ENCODE measurements at regions of chr12 and their contacts with region 1.

Region 1: DNA sequence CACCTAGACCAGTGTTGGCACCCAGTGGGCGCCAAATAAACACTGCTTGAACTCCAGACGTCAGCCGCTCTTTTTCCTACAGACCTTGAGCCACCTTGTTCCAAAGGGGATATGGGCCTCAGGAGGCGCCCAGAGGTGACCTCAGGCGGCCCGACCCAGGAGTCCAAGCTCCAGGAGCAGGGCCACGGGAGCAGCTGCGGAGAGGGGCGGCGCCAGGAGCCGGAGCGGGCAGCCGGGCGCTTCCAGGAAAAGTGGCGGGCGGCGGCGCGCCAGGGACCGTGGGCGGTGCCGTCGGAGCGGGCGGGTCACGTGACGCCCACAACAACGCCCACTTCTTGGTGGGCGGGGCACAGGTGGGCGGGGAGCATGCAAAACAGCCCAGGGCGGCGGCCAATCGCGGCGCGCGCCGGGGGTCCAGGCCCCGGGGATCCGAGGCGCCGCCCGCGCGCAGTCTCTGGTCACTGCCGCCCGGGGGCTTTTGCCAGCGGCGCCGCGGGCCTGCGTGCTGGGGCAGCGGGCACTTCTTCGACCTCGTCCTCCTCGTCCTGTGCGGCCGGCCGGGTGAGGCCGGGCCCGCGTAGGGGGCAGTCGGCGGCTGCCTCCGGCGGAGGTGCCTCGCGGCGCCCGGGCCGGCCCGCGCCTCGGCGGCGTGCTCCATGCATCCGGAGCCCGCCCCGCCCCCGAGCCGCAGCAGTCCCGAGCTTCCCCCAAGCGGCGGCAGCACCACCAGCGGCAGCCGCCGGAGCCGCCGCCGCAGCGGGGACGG is at the start of gene ORAI1:
- DNase-seq: peak; percentile 54
- H3K4me3 ChIP-seq: peak within 1 kb of the TSS; percentile 59
- H3K27me3 ChIP-seq: no peaks in the 10 kb centered on the region
- CTCF ChIP-seq: 0 out of 2 replicates have a peak, but pooled peaks have one; percentile 2
- polyA plus RNA-seq, gene ORAI1: 20.3 and 28.3 TPM in 2 replicates

Region 2: GRCh38 chr12:121467115-121467793 is 159.0 kb before region 1 on chr12:
- CTCF ChIA-PET with region 1: no interaction called
- POLR2A ChIA-PET with region 1: interaction called, 14 read pairs
- DNase-seq: peak; percentile 44
- H3K4me3 ChIP-seq: peak overlapping the region; percentile 49
- H3K27me3 ChIP-seq: no peaks in the 10 kb centered on the region
- CTCF ChIP-seq: no peak

Region 3: GRCh38 chr12:121499929-121500793 is 126.1 kb before region 1 on chr12:
- CTCF ChIA-PET with region 1: interaction called, 15 read pairs
- POLR2A ChIA-PET with region 1: no interaction called
- DNase-seq: peak; percentile 4
- H3K4me3 ChIP-seq: no peak overlapping the region
- H3K27me3 ChIP-seq: no peaks in the 10 kb centered on the region
- CTCF ChIP-seq: peak; percentile 98

Region 4: GRCh38 chr12:121543786-121544185 is 82.5 kb before region 1 on chr12:
- CTCF ChIA-PET with region 1: no interaction called
- POLR2A ChIA-PET with region 1: no interaction called
- DNase-seq: no peak
- H3K4me3 ChIP-seq: no peak overlapping the region
- H3K27me3 ChIP-seq: no peaks in the 10 kb centered on the region
- CTCF ChIP-seq: no peak

Region 5: DNA sequence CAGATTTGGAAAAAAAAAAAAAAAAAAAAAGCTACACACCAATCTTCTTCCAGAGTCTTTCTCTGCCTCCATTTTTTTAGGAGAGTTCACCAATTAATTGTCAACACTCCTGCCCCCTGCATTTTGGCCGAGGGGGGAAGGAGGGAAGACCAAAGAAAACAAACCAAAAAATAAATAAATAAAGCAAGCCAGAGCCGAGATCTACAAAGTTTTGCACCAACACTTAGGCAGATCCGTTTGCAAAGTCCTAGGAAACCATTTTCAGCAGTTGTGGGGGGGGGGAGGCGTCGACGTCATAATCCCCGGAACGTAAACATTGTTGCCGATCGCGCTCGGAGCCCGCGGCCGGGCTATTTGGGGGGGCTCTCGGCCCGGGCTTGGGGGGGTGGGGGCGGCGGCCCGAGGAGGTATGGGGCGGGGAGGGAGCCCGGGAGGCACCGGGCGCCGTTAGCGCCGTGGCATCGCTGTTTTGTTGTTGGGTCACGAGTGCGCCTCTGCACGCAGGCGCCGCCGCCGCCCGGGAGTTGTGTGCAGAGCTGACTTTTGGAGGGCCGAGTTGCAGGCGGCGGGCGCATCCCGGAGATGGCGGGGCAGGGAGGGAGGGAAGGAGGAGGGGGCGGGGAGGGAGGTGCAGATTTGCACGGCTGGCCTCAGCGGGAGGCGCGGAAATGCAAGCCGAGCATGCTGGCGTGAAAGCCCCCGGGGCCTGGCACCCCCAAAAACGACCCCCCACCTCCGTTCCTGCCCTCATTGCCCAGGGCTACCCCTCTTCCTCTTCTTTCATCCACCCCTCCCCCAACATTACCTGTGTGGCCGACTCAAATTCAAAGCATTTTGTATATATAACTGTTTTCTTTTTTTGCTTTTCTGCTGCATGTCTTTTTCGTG is 46.0 kb before region 1 on chr12:
- CTCF ChIA-PET with region 1: interaction called, 14 read pairs
- POLR2A ChIA-PET with region 1: no interaction called
- DNase-seq: no peak
- H3K4me3 ChIP-seq: peak overlapping the region; percentile 57
- H3K27me3 ChIP-seq: no peaks in the 10 kb centered on the region
- CTCF ChIP-seq: no peak

Region 6: DNA sequence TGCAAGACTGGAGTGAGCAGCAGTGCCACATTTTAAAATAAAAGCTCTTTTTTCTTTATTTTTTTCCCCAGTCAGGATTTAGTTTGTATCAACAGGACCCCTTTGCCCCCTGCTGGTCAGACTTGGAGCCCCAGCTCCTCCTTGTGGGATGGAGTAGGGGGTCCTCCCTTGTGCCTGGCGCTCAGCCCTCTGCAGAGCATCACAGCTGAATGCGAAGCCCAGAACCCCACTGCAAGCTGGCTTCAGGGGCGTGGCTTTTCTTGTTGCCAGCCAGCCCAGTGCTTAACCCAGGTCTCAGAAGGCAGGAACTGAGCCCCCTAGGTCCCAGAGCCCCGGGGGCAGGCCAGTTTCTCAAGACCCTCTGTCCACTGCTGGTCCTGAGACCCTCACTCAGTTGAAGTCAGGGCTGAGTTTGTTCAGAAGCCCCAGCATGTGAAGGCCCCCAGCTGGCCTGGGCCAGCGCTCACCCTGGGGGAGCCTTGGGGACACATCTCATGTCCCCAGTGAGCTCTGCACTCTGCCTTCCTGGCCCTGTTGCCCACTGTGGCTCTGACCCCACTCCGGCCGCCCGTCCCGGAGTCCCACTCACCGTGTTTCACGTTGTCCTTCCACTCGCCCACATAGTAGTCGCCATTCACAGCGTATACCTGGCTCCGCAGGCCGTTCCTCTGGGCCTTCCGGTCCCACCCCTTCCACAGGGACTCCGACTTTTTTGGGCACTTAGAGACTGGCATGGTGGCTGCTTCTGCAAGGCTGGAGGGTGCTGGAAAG is 42.7 kb after region 1 on chr12:
- CTCF ChIA-PET with region 1: interaction called, 10 read pairs
- POLR2A ChIA-PET with region 1: no interaction called
- DNase-seq: no peak
- H3K4me3 ChIP-seq: no peak overlapping the region
- H3K27me3 ChIP-seq: no peaks in the 10 kb centered on the region
- CTCF ChIP-seq: peak; percentile 70